ENCODE measurements at regions of chr10 and their contacts with region 1.

Region 1: GRCh38 chr10:47361293-47361692 is 13.1 kb downstream of the RBP3 start:
- DNase-seq: peak; percentile 35 to 41
- ATAC-seq: peak; percentile 54 to 85; a peak in 4 of 6 replicates
- H3K4me3 ChIP-seq: no peak overlapping the region
- H3K27ac ChIP-seq: no peak overlapping the region
- H3K4me1 ChIP-seq: no peaks in the 10 kb centered on the region
- CTCF ChIP-seq: peak; percentile 58
- EP300 ChIP-seq: no peak
- POLR2A ChIP-seq: no peak
- RAD21 ChIP-seq: peak; percentile 50 to 61

Region 2: GRCh38 chr10:47374611-47375536 is 13.6 kb after region 1 on chr10:
- CTCF ChIA-PET with region 1: interaction called, 27 read pairs
- POLR2A ChIA-PET with region 1: no interaction called
- DNase-seq: no peak
- ATAC-seq: no peak
- H3K4me3 ChIP-seq: no peak overlapping the region
- H3K27ac ChIP-seq: no peak overlapping the region
- H3K4me1 ChIP-seq: no peaks in the 10 kb centered on the region
- CTCF ChIP-seq: no peak
- EP300 ChIP-seq: no peak
- POLR2A ChIP-seq: no peak
- RAD21 ChIP-seq: no peak